PC-9 (cell line): ENCODE measurements at regions of chr7 and their contacts with region 1.

Region 1: GRCh38 chr7:120981888-120982615 is 6.5 kb upstream of the CPED1 start:
- DNase-seq: no peak
- H3K4me3 ChIP-seq: no peak overlapping the region
- H3K27ac ChIP-seq: no peak overlapping the region
- H3K4me1 ChIP-seq: no peaks in the 10 kb centered on the region
- H3K27me3 ChIP-seq: no peaks in the 10 kb centered on the region
- CTCF ChIP-seq: no peak

Region 2: GRCh38 chr7:120680985-120681384 is 301.1 kb before region 1 on chr7:
- CTCF ChIA-PET with region 1: interaction called, 18 read pairs
- POLR2A ChIA-PET with region 1: no interaction called
- intact Hi-C with region 1: no loop called
- DNase-seq: no peak
- H3K4me3 ChIP-seq: no peak overlapping the region
- H3K27ac ChIP-seq: no peak overlapping the region
- H3K4me1 ChIP-seq: no peaks in the 10 kb centered on the region
- H3K27me3 ChIP-seq: no peaks in the 10 kb centered on the region
- CTCF ChIP-seq: no peak